CD8-positive, alpha-beta memory T cell (primary cell): ENCODE measurements at regions of chr17 and their contacts with region 1.

Region 1: DNA sequence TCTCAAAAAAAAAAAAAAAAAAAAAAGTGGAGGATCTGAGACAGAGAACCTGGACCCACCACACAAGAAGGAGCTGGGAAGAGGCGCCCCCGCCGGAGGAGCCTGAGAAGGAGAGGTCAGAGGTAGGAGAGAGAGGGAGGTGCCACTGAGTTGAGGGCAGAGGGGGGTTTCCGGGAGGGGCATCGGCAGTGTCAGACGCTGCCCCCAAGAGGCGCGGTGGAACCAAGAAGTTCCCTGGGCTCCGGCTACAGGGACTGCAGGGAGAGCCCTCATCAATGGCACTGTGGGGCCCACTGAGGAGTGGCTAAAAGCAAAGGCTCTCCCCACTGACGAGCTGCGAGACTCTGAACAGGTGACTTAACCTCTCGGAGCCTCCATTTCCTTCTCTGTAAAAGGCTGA is 4.2 kb downstream of the CCDC42 start:
- DNase-seq: peak; percentile 47 to 77 (median 66)
- H3K4me3 ChIP-seq: peak overlapping the region; percentile 67
- H3K4me3 Mint-ChIP-seq: peak overlapping the region; percentile 80 to 91 (median 86)
- H3K27ac ChIP-seq: no peak overlapping the region
- H3K27ac Mint-ChIP-seq: peak overlapping the region; percentile 70 to 97 (median 94)
- H3K4me1 ChIP-seq: peaks cover 16% of the 10 kb centered on the region
- H3K4me1 Mint-ChIP-seq: peaks cover 16 to 27% (median 21%) of the 10 kb centered on the region in 3 donors
- H3K27me3 ChIP-seq: no peaks in the 10 kb centered on the region
- H3K27me3 Mint-ChIP-seq: peaks cover 0 to 2% of the 10 kb centered on the region in 2 donors

Region 2: GRCh38 chr17:8662076-8662831 is 78.2 kb before region 1 on chr17:
- CTCF ChIA-PET with region 1: no interaction called
- POLR2A ChIA-PET with region 1: interaction called, 13 read pairs
- DNase-seq: no peak
- H3K4me3 ChIP-seq: no peak overlapping the region
- H3K4me3 Mint-ChIP-seq: no peak overlapping the region
- H3K27ac ChIP-seq: no peak overlapping the region
- H3K27ac Mint-ChIP-seq: no peak overlapping the region
- H3K4me1 ChIP-seq: no peaks in the 10 kb centered on the region
- H3K4me1 Mint-ChIP-seq: no peaks in the 10 kb centered on the region
- H3K27me3 ChIP-seq: no peaks in the 10 kb centered on the region
- H3K27me3 Mint-ChIP-seq: peaks cover 5 to 26% of the 10 kb centered on the region in 2 donors

Region 3: DNA sequence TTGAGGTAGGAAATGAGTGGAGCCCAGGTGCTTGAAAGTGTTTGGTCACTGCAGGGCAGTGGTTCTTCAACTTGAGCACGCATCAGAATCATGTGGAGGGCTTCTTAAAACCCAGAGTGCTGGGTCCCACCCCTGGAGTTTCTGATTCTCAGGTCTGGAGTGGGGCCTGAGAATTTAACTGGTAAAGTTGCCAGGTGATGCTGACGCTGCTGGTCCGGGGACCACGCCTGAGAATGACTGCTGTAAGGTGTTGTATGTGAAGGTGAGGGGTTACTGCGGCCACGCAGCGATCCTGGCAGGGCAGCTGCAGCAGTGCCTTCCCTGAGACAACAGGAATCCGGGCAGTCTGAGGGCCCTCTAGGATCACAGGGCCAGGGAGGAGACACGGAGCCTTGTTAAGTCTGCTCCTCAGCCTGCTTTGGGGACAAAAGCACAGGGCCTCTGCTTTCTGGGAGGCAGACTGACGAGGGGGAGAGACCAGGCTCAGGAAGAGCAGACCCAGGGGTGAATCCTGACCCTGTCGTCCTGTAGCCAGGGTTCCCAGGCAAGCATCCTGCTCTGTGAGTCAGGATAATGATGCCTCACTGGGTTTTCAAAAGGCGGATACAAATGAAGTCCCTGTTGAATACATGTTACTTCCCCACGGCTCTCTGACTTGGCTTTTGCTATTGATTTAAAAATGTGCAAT is 12.1 kb before region 1 on chr17:
- CTCF ChIA-PET with region 1: no interaction called
- POLR2A ChIA-PET with region 1: no interaction called
- DNase-seq: no peak
- H3K4me3 ChIP-seq: no peak overlapping the region
- H3K4me3 Mint-ChIP-seq: no peak overlapping the region
- H3K27ac ChIP-seq: no peak overlapping the region
- H3K27ac Mint-ChIP-seq: no peak overlapping the region
- H3K4me1 ChIP-seq: no peaks in the 10 kb centered on the region
- H3K4me1 Mint-ChIP-seq: no peaks in the 10 kb centered on the region
- H3K27me3 ChIP-seq: no peaks in the 10 kb centered on the region
- H3K27me3 Mint-ChIP-seq: peaks cover 3 to 24% of the 10 kb centered on the region in 2 donors